BJ (cell line): ENCODE measurements at regions of chr17 and their contacts with region 1.

Region 1: DNA sequence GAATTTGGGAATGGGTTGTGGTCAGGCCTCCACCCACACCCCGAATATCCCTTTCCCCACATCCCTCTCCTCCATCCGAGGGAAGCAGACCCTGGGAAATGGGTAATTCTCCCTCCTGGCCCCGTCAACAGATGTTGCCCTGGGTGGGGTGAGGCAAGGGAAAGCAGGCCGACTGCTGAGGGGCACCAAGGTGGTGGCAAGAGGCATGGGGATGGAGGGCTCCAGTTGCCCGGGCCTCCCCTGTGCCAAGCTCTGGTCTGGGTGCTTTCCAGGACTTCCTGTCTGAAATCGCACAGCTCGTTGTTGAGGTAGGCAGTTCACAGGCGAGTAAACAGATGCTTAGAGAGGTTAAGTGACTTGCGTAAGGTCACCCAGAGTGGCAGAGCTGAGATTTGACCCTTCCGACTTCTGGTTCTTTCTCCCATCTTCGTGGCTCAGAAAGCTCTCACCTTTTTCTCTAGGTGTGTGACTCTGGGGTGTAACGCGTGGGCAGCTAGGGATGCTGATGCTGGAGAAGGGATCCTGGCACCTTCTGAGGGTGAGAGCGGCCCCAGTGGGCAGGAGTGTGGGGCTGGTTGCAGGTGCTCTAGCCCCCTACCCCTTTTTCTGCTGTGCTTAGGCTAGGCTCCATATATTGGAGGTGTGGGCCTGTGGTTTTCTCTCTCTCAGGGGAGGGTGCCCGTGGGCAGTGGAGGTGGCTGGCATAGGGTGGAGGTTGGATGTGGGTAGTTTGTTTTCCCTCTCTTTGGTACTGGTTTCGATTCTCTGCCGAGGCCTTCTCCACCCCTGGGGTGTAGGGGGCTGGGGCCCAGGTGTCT is 17.2 kb downstream of the RARA start:
- DNase-seq: no peak
- H3K4me3 ChIP-seq: no peak overlapping the region
- H3K27me3 ChIP-seq: no peaks in the 10 kb centered on the region
- CTCF ChIP-seq: no peak

Region 2: DNA sequence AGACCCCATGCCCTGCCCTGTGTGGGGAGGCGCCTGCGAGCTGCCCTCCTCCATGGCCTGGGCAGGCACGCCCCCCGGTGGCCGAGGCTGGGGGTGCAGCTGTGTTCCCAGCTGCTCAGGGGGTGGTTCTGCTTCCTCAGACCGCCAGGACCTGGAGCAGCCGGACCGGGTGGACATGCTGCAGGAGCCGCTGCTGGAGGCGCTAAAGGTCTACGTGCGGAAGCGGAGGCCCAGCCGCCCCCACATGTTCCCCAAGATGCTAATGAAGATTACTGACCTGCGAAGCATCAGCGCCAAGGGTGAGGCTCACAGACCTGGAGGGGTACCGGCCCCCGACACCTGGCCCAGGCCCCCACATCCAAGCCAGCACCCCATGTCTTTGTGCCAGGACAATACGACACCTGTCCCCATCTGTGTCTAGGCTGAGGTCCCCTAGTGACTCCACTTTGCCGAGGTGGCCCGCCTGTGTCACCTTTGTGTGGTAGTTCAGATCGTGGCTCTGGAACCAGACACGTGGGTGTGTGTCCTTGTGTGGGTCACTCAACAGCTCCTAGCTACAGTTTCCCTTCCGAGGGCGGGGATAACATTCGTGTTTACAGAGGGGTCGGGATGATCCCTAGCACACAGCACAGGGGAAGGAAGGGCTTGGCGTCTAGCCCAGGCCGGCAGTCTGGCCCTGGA is 29.0 kb after region 1 on chr17:
- CTCF ChIA-PET with region 1: interaction called, 762 read pairs
- POLR2A ChIA-PET with region 1: no interaction called
- DNase-seq: no peak
- H3K4me3 ChIP-seq: no peak overlapping the region
- H3K27me3 ChIP-seq: no peaks in the 10 kb centered on the region; the same call in 1 of the 2 replicates
- CTCF ChIP-seq: peak; percentile 94

Region 3: DNA sequence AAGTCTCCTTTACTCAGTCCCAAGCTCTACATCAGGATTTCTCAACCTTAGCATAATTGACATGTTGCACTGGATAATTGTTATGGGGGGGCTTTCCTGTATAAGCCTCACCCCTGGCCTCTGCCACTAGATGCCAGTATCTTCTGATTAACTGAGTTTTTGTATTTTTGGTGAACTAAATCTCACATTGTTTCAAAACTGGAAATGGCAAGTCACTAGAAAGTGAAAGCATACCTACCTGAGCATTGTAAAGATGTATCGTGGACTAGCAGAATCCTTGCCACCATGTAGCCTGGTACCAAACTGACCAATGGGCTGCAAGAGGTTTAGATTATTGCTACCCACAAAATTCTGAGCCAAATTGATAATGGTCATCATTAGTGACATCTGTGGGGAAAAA is 76.4 kb after region 1 on chr17:
- CTCF ChIA-PET with region 1: no interaction called
- POLR2A ChIA-PET with region 1: no interaction called
- DNase-seq: no peak
- H3K4me3 ChIP-seq: no peak overlapping the region
- H3K27me3 ChIP-seq: no peaks in the 10 kb centered on the region
- CTCF ChIP-seq: no peak